Activated CD8-positive, alpha-beta T cell treated with anti-CD3 and anti-CD28 coated beads, Interleukin-2, amount 10 ng/mL, durations not matched to agents 7 days and 5 days (primary cell): ENCODE measurements at regions of chr4 and their contacts with region 1.

Region 1: DNA sequence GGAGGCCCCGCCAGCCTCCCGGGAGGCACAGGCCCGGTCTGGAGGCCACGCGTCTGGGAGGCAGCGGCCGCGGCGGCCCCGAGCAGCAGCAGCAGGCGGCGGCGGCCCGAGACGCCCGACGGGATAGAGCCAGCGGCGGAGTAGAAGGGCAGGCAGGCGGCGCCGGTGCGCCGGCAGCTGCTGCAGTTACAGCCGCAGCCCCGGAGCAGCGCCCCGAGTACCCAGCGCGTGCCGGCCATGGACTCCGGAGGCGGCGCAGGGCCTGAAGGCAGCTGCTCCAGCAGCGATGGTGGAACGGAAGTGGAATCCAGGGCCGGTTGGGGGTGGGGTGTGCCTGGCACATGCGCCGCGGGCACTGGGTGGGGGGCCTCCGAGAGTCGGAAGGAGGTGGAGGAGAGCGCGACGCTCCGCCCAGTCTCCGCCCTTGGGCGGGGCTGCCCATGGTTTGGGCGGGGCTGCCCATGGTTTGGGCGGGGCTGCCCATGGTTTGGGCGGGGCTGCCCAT is at the start of gene GRSF1:
- DNase-seq: peak; percentile 96
- ATAC-seq: peak; percentile 91
- H3K4me3 Mint-ChIP-seq: peak within 1 kb of the TSS; percentile 97
- H3K27ac Mint-ChIP-seq: peak within 1 kb of the TSS; percentile 97
- H3K4me1 Mint-ChIP-seq: peaks cover 34% of the 10 kb centered on the region
- H3K27me3 Mint-ChIP-seq: no peaks in the 10 kb centered on the region
- total RNA-seq, gene GRSF1: 67.9 to 69.2 TPM

Region 2: GRCh38 chr4:70901984-70902576 is 62.4 kb after region 1 on chr4 and contains the start of gene MOB1B:
- CTCF ChIA-PET with region 1: interaction called, 6 read pairs
- POLR2A ChIA-PET with region 1: interaction called, 12 read pairs
- DNase-seq: peak; percentile 91
- ATAC-seq: peak; percentile 95
- H3K4me3 Mint-ChIP-seq: peak within 1 kb of the TSS; percentile 98
- H3K27ac Mint-ChIP-seq: peak within 1 kb of the TSS; percentile 94
- H3K4me1 Mint-ChIP-seq: peaks cover 23% of the 10 kb centered on the region
- H3K27me3 Mint-ChIP-seq: no peaks in the 10 kb centered on the region
- total RNA-seq, gene MOB1B: 15.3 to 16.4 TPM

Region 3: GRCh38 chr4:70993181-70994068 is 153.8 kb after region 1 on chr4 and contains the start of gene DCK:
- CTCF ChIA-PET with region 1: interaction called, 3 read pairs
- POLR2A ChIA-PET with region 1: interaction called, 18 read pairs
- DNase-seq: peak; percentile 86
- ATAC-seq: peak; percentile 86
- H3K4me3 Mint-ChIP-seq: peak within 1 kb of the TSS; percentile 96
- H3K27ac Mint-ChIP-seq: peak within 1 kb of the TSS; percentile 88
- H3K4me1 Mint-ChIP-seq: peaks cover 38% of the 10 kb centered on the region
- H3K27me3 Mint-ChIP-seq: no peaks in the 10 kb centered on the region
- total RNA-seq, gene DCK: 74.2 to 77.3 TPM